CD8-positive, alpha-beta memory T cell (primary cell): ENCODE measurements at regions of chr16 and their contacts with region 1.

Region 1: GRCh38 chr16:5071681-5072333 is at the start of gene ALG1:
- DNase-seq: peak; percentile 85 to 93 (median 86)
- H3K4me3 ChIP-seq: peak within 1 kb of the TSS; percentile 69
- H3K4me3 Mint-ChIP-seq: peak within 1 kb of the TSS; percentile 87 to 99 (median 94)
- H3K27ac ChIP-seq: peak within 1 kb of the TSS; percentile 73
- H3K27ac Mint-ChIP-seq: peak within 1 kb of the TSS; percentile 95 to 99 (median 96)
- H3K4me1 ChIP-seq: peaks cover 19% of the 10 kb centered on the region
- H3K4me1 Mint-ChIP-seq: peaks cover 30 to 39% (median 31%) of the 10 kb centered on the region in 3 donors
- H3K27me3 ChIP-seq: no peaks in the 10 kb centered on the region
- H3K27me3 Mint-ChIP-seq: no peaks in the 10 kb centered on the region
- total RNA-seq, gene ALG1: 47.8 to 50.7 TPM

Region 2: GRCh38 chr16:5033256-5034169 is 38.3 kb before region 1 on chr16 and contains the start of gene NAGPA:
- CTCF ChIA-PET with region 1: interaction called, 4 read pairs
- POLR2A ChIA-PET with region 1: interaction called, 10 read pairs
- DNase-seq: peak; percentile 75 to 90 (median 80)
- H3K4me3 ChIP-seq: peak within 1 kb of the TSS; percentile 68
- H3K4me3 Mint-ChIP-seq: peak within 1 kb of the TSS; percentile 87 to 93 (median 90)
- H3K27ac ChIP-seq: peak within 1 kb of the TSS; percentile 31
- H3K27ac Mint-ChIP-seq: peak within 1 kb of the TSS; percentile 70 to 98 (median 91)
- H3K4me1 ChIP-seq: peaks cover 18% of the 10 kb centered on the region
- H3K4me1 Mint-ChIP-seq: peaks cover 12 to 26% (median 17%) of the 10 kb centered on the region in 3 donors
- H3K27me3 ChIP-seq: no peaks in the 10 kb centered on the region
- H3K27me3 Mint-ChIP-seq: no peaks in the 10 kb centered on the region
- total RNA-seq, gene NAGPA: 18.8 to 19.0 TPM

Region 3: DNA sequence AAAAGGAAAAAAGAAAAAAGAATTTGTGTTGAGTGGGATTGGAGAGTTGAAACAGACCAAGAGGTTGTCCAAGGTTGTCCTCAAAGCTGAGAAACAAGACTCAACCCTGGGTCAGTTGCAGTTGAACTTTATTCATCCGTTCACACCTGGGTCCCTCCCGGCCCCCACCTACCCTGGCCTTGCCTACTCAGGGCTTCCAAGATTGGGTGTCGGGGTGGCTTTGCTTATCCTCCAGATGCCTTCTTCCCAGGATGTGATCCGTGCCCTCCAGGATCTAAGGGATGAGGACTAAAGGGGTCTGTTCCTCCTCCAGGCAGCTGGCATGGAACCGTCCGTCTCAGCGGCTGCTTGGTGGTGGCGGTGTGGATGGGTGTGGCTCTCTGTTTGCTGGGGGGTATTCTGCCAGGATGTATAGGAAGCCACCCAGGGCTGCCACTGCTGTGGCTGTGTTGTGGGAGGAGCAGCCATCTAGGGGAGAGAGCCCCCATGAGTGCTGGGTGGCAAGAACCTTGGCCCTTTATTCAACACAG is 27.7 kb before region 1 on chr16:
- CTCF ChIA-PET with region 1: no interaction called
- POLR2A ChIA-PET with region 1: no interaction called
- DNase-seq: no peak
- H3K4me3 ChIP-seq: no peak overlapping the region
- H3K4me3 Mint-ChIP-seq: no peak overlapping the region
- H3K27ac ChIP-seq: no peak overlapping the region
- H3K27ac Mint-ChIP-seq: no peak overlapping the region
- H3K4me1 ChIP-seq: no peaks in the 10 kb centered on the region
- H3K4me1 Mint-ChIP-seq: no peaks in the 10 kb centered on the region
- H3K27me3 ChIP-seq: no peaks in the 10 kb centered on the region
- H3K27me3 Mint-ChIP-seq: peaks cover 3 to 5% of the 10 kb centered on the region in 2 donors